CD4-positive, alpha-beta memory T cell (primary cell): ENCODE measurements at regions of chr19 and their contacts with region 1.

Region 1: DNA sequence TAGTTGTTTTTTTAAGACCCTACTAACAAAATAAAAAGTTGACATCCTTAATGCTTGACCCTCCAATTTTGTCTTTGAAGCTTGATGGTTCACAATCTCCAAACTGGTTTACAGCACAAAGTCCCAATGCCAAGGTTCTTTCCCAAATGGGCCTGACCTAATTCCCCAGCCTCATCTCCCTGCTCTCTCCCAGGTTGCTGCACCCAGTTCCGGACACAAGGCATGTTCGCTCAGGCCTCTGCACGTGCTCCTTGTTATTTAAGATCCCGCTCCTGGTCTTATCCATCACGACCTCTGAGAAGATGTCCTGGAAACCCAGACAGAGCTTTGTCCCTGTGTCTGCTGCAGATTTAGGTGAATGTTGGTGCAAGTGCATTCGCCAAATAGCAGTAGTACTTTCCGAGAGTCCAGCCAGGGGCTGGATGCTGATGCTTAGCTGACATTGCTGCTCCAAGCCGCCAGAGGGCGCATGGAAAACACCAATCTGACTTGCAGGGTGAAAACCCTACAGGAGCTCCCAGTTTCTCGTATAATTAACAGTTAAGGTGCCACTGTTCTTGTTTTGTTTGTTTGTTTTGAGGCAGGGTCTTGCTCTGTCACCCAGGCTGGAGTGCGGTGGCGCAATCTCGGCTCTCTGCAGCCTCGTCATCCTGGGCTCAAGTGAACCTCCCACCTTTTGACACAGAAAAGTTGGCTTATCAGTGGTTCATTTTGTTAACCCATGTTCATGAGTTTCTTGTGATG is 18.5 kb downstream of the LYPD3 start:
- DNase-seq: peak; percentile 74 to 81 (median 79)
- H3K4me3 ChIP-seq: no peak overlapping the region
- H3K4me3 Mint-ChIP-seq: peak overlapping the region in 2 of 8 donors; percentile 3 to 52
- H3K27ac ChIP-seq: no peak overlapping the region
- H3K27ac Mint-ChIP-seq: peak overlapping the region; percentile 54 to 93 (median 75)
- H3K4me1 ChIP-seq: peaks cover 16% of the 10 kb centered on the region
- H3K4me1 Mint-ChIP-seq: peaks cover 13 to 29% (median 20%) of the 10 kb centered on the region in 4 donors
- H3K27me3 ChIP-seq: no peaks in the 10 kb centered on the region
- H3K27me3 Mint-ChIP-seq: no peaks in the 10 kb centered on the region

Region 2: GRCh38 chr19:43457809-43458208 is 10.9 kb after region 1 on chr19:
- CTCF ChIA-PET with region 1: interaction called, 34 read pairs
- POLR2A ChIA-PET with region 1: interaction called, 29 read pairs
- intact Hi-C with region 1: loop called (anchors 2 kb)
- DNase-seq: no peak
- H3K4me3 ChIP-seq: no peak overlapping the region
- H3K4me3 Mint-ChIP-seq: no peak overlapping the region
- H3K27ac ChIP-seq: no peak overlapping the region
- H3K27ac Mint-ChIP-seq: no peak overlapping the region
- H3K4me1 ChIP-seq: peaks cover 8% of the 10 kb centered on the region
- H3K4me1 Mint-ChIP-seq: peaks cover 4 to 23% (median 13%) of the 10 kb centered on the region in 4 donors
- H3K27me3 ChIP-seq: no peaks in the 10 kb centered on the region
- H3K27me3 Mint-ChIP-seq: no peaks in the 10 kb centered on the region

Region 3: GRCh38 chr19:43495082-43495481 is 48.2 kb after region 1 on chr19:
- CTCF ChIA-PET with region 1: interaction called, 18 read pairs
- POLR2A ChIA-PET with region 1: interaction called, 3 read pairs
- intact Hi-C with region 1: no loop called
- DNase-seq: no peak
- H3K4me3 ChIP-seq: no peak overlapping the region
- H3K4me3 Mint-ChIP-seq: no peak overlapping the region
- H3K27ac ChIP-seq: no peak overlapping the region
- H3K27ac Mint-ChIP-seq: peak overlapping the region in 1 of 7 donors; percentile 29
- H3K4me1 ChIP-seq: no peaks in the 10 kb centered on the region
- H3K4me1 Mint-ChIP-seq: peaks cover 2 to 9% (median 3%) of the 10 kb centered on the region in 4 donors
- H3K27me3 ChIP-seq: no peaks in the 10 kb centered on the region
- H3K27me3 Mint-ChIP-seq: no peaks in the 10 kb centered on the region

Region 4: DNA sequence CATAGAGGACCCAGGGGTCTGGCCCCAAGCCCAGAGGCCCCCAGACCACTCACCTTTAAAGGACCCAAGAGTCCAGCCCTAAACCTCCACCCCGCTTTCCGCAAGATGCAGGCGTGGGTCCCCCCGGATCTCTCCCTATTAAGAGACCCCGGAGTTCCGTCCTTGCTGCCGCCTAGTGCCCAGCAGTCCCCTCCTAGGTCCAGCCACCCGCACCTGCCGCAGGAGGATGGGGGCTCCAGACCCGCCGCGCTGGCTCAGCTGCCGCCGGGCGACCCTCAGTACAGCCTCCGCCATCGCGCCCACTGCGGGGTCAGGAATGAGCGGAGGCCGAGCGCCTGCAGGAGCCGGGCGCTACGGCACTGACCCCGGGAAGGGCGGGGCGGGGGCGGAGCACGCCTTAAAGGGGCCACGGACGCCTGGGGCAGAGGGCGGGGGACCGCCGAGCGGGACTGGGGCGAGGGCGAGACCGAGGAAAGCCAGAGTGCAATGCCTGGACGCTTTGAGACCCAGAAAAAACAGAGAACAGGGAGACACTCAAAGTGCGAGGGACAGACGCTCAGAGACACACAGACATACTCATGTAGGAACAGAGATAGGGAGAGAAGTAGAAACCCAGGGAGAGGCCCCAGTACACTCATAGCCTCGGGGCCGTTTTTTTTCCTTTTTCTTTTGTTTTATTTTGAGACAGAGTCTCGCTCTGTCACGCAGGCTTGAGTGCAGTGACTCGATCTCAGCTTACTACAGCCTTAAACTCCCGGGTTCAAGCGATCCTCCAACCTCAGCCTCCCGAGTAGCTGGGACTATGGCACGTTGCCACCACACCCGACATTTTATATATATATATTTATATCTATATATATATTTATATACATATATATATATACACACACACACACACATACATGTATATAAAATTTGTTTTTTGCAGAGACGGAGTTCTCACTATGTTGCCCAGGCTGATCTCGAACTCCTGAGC is 80.3 kb after region 1 on chr19 and contains the start of gene ETHE1:
- CTCF ChIA-PET with region 1: interaction called, 835 read pairs
- POLR2A ChIA-PET with region 1: interaction called, 11 read pairs
- intact Hi-C with region 1: no loop called
- DNase-seq: peak; percentile 52 to 68 (median 57)
- H3K4me3 ChIP-seq: peak within 1 kb of the TSS; percentile 60 to 90
- H3K4me3 Mint-ChIP-seq: peak within 1 kb of the TSS; percentile 75 to 94 (median 80)
- H3K27ac ChIP-seq: peak within 1 kb of the TSS; percentile 67
- H3K27ac Mint-ChIP-seq: peak within 1 kb of the TSS; percentile 37 to 94 (median 88)
- H3K4me1 ChIP-seq: peaks cover 27% of the 10 kb centered on the region
- H3K4me1 Mint-ChIP-seq: peaks cover 17 to 36% (median 22%) of the 10 kb centered on the region in 4 donors
- H3K27me3 ChIP-seq: no peaks in the 10 kb centered on the region
- H3K27me3 Mint-ChIP-seq: no peaks in the 10 kb centered on the region
- total RNA-seq, gene ETHE1: 23.9 to 29.1 TPM

Region 5: GRCh38 chr19:43595999-43596841 is 149.3 kb after region 1 on chr19 and contains the starts of genes IRGQ and ZNF576:
- CTCF ChIA-PET with region 1: interaction called, 43 read pairs
- POLR2A ChIA-PET with region 1: interaction called, 7 read pairs
- intact Hi-C with region 1: loop called (anchors 1 kb)
- DNase-seq: peak; percentile 99
- H3K4me3 ChIP-seq: peak within 1 kb of the TSS; percentile 50 to 98
- H3K4me3 Mint-ChIP-seq: peak within 1 kb of the TSS; percentile 93 to 98 (median 95)
- H3K27ac ChIP-seq: peak within 1 kb of the TSS; percentile 93
- H3K27ac Mint-ChIP-seq: peak within 1 kb of the TSS; percentile 100
- H3K4me1 ChIP-seq: peaks cover 26% of the 10 kb centered on the region
- H3K4me1 Mint-ChIP-seq: peaks cover 24 to 49% (median 35%) of the 10 kb centered on the region in 4 donors
- H3K27me3 ChIP-seq: no peaks in the 10 kb centered on the region
- H3K27me3 Mint-ChIP-seq: no peaks in the 10 kb centered on the region
- total RNA-seq, gene IRGQ: 16.5 to 17.9 TPM
- total RNA-seq, gene ZNF576: 18.4 to 18.6 TPM

Region 6: DNA sequence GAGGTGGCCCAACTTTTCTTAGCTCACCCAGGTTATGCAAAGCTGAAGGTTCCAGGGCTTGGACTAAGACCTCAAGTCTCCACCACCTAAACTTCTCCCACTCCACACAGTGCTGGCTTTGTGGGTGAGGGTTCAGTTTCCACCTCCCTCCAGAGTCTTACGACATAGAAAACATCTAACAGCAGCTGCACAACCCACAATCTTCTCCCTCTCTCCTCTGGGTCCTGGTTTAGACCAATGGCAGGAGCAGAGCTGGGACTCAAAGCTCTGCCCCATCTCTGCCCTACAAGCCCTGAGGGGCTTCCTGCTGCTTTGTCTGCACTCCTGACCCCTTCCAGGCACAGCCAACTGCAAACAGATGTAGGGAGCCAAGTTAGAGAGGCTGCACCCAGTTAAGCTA is 284.9 kb after region 1 on chr19:
- CTCF ChIA-PET with region 1: no interaction called
- POLR2A ChIA-PET with region 1: no interaction called
- intact Hi-C with region 1: no loop called
- DNase-seq: no peak
- H3K4me3 ChIP-seq: no peak overlapping the region
- H3K4me3 Mint-ChIP-seq: no peak overlapping the region
- H3K27ac ChIP-seq: no peak overlapping the region
- H3K27ac Mint-ChIP-seq: peak overlapping the region in 2 of 7 donors; percentile 37 to 42
- H3K4me1 ChIP-seq: no peaks in the 10 kb centered on the region
- H3K4me1 Mint-ChIP-seq: peaks cover 0 to 3% (median 0%) of the 10 kb centered on the region in 4 donors
- H3K27me3 ChIP-seq: no peaks in the 10 kb centered on the region
- H3K27me3 Mint-ChIP-seq: no peaks in the 10 kb centered on the region